ENCODE measurements at regions of chr1 and their contacts with region 1.

Region 1: DNA sequence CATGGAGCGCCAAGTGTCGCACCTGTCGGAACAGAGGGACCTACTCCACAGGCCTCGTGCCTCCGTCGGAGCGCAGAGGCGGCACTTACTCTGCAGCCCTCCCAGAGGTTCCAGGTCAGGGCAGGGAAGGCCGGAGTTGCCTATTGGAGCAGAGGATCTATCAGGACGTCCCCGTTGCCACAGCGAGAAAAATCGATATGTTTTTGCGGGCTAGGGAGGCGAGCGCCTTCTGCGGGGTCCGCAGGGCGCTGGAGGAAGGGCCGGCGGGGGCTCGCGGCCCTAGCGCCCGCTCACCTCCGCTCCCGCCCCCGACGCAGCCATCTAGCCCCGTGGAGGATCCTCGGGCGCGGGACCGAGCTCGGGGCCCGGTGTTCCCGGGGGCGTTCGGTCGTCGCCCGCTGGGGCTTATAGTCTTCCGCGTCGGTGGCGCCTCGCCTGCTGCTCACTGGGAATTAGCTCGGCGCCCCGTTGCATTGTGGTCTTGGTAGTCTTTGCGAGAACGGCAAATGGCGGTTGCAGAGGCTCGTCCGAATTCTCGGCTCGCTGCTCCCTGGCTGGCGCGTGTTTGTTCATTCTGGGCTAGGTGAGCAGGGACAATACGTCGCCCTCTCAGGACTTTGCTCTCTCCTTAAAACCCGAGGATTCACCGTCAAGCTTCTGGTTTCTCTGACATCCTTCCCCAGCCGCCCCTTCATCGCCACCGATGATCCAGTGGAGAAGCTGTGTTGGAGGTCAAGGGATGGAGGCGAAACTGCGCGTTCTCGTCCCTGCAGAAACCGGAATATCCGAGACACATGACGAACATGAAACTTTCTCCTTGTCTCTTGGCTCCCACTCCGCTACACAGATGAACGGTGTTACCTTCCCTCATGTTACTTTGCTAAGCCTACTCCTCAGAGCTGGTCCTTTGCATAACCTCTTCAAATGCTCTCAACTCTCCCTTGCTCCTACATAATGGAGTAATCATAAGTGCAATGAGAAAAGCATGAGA is at the start of gene JTB:
- DNase-seq: peak; percentile 78
- ATAC-seq: peak; percentile 95
- H3K4me3 ChIP-seq: peak within 1 kb of the TSS; percentile 65
- H3K27ac ChIP-seq: peak within 1 kb of the TSS; percentile 60
- H3K4me1 ChIP-seq: no peaks in the 10 kb centered on the region; the same call in 1 of the 2 replicates
- H3K27me3 ChIP-seq: no peaks in the 10 kb centered on the region
- CTCF ChIP-seq: no peak; the same call in 1 of the 2 replicates
- POLR2A ChIP-seq: peak; percentile 76
- RAD21 ChIP-seq: no peak
- total RNA-seq, gene JTB: 114 and 123 TPM in 2 replicates

Region 2: DNA sequence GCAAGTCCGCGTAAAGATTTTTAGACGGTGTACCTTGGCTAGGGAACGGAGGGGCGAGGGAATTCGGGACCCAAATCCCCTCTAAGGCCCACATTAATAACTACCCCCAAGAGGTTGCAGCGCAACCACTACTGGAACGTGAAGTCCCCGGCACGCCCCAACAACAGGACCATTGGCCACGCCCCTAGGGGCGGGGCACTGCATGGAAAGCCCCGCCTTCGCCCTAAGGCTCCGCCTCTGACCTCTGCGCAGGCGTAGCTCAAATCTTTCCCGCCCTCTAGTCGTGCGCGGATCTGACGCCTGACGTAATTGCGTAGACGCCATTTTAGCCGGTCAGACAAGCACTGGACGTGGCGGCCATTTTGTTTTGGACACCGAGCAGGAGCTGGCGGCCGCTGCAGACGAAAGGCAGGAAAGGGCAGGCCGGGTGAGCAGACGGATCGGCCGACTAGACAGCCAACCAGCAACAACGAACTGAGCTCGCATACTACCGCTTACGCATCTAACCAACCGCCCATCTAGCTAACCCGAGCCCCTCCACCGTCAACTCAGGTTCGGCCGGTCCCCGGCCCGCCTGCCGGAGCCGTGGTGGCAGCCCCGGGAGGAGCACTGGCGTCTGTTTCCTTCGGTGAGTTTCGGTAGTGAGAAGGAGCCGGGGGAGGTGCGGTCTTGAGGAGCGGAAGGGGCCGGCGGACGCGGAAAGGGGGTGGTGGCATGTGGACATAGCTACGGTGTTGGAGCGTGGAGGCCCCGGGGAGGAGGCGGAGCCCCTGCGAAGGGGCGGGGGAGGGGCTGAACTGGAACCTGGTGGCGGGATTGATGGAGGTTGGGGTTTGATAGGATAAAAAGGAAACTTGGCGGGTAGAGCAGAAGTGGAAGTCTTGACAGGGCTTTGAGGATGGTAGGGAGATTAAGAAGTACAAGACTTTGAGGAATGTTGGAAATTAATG is 343.6 kb before region 1 on chr1 and contains the start of gene CHTOP:
- CTCF ChIA-PET with region 1: no interaction called
- POLR2A ChIA-PET with region 1: no interaction called
- dilution Hi-C with region 1: no loop called
- in situ Hi-C with region 1: no loop called
- intact Hi-C with region 1: no loop called
- DNase-seq: peak; percentile 99
- ATAC-seq: peak; percentile 97
- H3K4me3 ChIP-seq: peak within 1 kb of the TSS; percentile 79
- H3K27ac ChIP-seq: peak within 1 kb of the TSS; percentile 98
- H3K4me1 ChIP-seq: peaks cover 3% of the 10 kb centered on the region
- H3K27me3 ChIP-seq: no peaks in the 10 kb centered on the region
- CTCF ChIP-seq: no peak
- POLR2A ChIP-seq: peak; percentile 94
- RAD21 ChIP-seq: no peak; the same call in 1 of the 2 replicates
- total RNA-seq, gene CHTOP: 33.9 and 38.9 TPM in 2 replicates

Region 3: DNA sequence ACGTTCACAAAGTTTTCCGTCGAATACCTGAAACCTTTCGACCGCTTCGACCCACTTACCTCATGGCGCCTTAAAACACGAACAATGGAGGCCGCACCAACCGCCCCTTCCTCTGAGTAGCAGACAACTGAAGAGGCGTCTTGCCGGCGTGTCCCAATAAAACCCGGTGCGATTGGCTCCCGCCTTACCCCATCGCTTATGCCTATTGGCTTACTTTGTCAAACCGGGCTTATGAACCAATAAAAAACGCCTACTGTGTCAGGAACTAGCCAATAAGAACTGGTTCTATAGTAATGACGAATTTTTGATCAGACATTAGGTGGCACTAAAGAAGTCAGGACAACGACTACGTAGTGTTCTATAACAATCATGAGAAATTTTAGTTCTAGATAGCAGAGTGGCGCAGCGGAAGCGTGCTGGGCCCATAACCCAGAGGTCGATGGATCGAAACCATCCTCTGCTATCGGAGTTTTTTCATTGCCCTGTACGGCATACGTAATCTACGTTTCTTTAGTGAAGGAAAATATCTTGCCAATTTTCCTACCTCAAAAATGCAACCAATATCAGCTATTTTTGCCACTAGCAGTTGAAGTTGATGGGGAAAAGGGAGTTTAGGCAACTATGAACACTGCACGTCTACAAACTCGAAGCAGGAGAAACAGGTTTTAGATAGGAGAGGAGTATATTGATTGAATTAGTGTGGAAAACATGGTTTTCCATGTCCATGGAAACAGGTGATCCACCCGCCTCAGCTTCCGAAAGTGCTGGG is 306.5 kb before region 1 on chr1 and contains the start of gene ILF2:
- CTCF ChIA-PET with region 1: no interaction called
- POLR2A ChIA-PET with region 1: no interaction called
- dilution Hi-C with region 1: no loop called
- in situ Hi-C with region 1: loop called (anchors 10 kb)
- intact Hi-C with region 1: no loop called
- DNase-seq: peak; percentile 100
- ATAC-seq: peak; percentile 93
- H3K4me3 ChIP-seq: peak within 1 kb of the TSS; percentile 65
- H3K27ac ChIP-seq: peak within 1 kb of the TSS; percentile 61
- H3K4me1 ChIP-seq: peaks cover 1% of the 10 kb centered on the region; the same call in 1 of the 2 replicates
- H3K27me3 ChIP-seq: no peaks in the 10 kb centered on the region
- CTCF ChIP-seq: peak; percentile 37
- POLR2A ChIP-seq: peak; percentile 97
- RAD21 ChIP-seq: no peak
- total RNA-seq, gene ILF2: 405 and 504 TPM in 2 replicates

Region 4: GRCh38 chr1:154000420-154000819 is 22.9 kb after region 1 on chr1:
- CTCF ChIA-PET with region 1: no interaction called
- POLR2A ChIA-PET with region 1: interaction called, 12 read pairs
- dilution Hi-C with region 1: no loop called
- in situ Hi-C with region 1: no loop called
- intact Hi-C with region 1: no loop called
- DNase-seq: no peak
- ATAC-seq: no peak
- H3K4me3 ChIP-seq: no peak overlapping the region
- H3K27ac ChIP-seq: no peak overlapping the region
- H3K4me1 ChIP-seq: peaks cover 4% of the 10 kb centered on the region
- H3K27me3 ChIP-seq: no peaks in the 10 kb centered on the region
- CTCF ChIP-seq: no peak
- POLR2A ChIP-seq: no peak
- RAD21 ChIP-seq: no peak

Region 5: GRCh38 chr1:155392898-155393411 is 1415.4 kb after region 1 on chr1:
- CTCF ChIA-PET with region 1: no interaction called
- POLR2A ChIA-PET with region 1: no interaction called
- dilution Hi-C with region 1: no loop called
- in situ Hi-C with region 1: no loop called
- intact Hi-C with region 1: no loop called
- DNase-seq: peak; percentile 55
- ATAC-seq: peak; percentile 68
- H3K4me3 ChIP-seq: no peak overlapping the region
- H3K27ac ChIP-seq: no peak overlapping the region
- H3K4me1 ChIP-seq: peaks cover 3% of the 10 kb centered on the region; the same call in 1 of the 2 replicates
- H3K27me3 ChIP-seq: no peaks in the 10 kb centered on the region
- CTCF ChIP-seq: no peak
- POLR2A ChIP-seq: no peak
- RAD21 ChIP-seq: no peak